ENCODE measurements at regions of chr4 and their contacts with region 1.

Region 1: GRCh38 chr4:7904952-7905915 is 34.4 kb downstream of the AFAP1 start:
- DNase-seq: no peak
- H3K4me3 ChIP-seq: no peak overlapping the region
- H3K27ac ChIP-seq: peak overlapping the region; percentile 75
- H3K4me1 ChIP-seq: peaks cover 94% of the 10 kb centered on the region
- H3K27me3 ChIP-seq: no peaks in the 10 kb centered on the region
- CTCF ChIP-seq: no peak
- POLR2A ChIP-seq: no peak

Region 2: DNA sequence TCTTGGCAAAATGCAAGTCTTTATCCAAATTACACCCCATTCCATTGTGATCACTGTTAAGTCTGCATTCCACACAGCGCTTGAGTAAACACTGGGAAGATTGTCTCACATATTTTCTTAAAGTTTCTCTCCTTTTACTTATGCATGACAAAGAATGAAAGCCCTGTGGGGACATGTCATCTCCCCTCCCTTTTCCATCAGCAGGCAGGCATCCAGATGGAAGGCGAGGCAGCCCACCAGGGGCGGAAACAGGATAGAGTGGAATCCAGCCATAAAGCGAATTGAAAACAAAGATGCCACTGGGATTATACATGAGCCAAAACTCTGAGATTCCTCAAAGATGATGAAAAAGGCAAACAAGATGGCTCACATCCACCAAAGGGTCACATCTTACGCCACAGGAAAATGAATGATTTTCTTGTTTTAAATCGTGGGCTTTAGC is 43.8 kb before region 1 on chr4:
- CTCF ChIA-PET with region 1: no interaction called
- POLR2A ChIA-PET with region 1: no interaction called
- dilution Hi-C with region 1: no loop called
- intact Hi-C with region 1: loop called (anchors 2 kb)
- DNase-seq: peak; percentile 90
- H3K4me3 ChIP-seq: peak overlapping the region in 1 of 3 experiments; percentile 42
- H3K27ac ChIP-seq: peak overlapping the region; percentile 99
- H3K4me1 ChIP-seq: peaks cover 55% of the 10 kb centered on the region
- H3K27me3 ChIP-seq: no peaks in the 10 kb centered on the region
- CTCF ChIP-seq: no peak
- POLR2A ChIP-seq: no peak

Region 3: DNA sequence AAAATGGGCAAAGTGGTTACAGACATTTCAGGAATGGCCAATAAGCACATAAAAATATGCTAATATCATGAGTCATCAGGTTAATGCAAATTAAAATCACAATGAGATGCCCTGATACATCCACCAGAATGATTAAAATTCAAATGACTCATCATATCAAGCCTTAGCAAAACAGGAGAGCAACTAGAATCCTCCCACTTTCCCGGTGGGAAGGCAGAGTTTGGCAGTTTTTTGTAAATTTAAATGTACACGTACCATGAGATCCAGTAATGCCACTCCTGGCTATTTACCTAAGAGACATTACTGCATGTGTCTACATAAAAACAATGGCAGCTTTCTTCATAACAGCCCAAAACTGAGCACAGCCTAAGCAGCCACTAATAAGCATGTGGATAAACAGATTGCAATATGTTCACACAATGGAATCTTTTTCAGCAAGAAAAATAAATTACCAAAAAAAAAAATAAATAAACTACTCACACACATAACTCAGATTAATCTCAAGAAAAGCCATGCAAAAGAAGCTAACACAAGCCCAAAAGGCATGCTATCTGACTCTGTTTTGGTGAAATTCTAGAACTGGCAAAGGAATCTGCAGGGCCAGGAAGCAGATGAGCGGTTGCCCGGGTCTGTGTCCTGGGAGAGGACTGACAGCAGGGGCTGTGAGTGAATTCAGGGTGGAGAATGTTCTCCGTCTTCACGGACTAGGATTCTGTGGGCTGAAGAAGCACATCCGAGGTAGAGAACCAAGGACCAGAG is 14.4 kb before region 1 on chr4:
- CTCF ChIA-PET with region 1: interaction called, 4 read pairs
- POLR2A ChIA-PET with region 1: no interaction called
- dilution Hi-C with region 1: no loop called
- intact Hi-C with region 1: loop called (anchors 1 kb)
- DNase-seq: peak; percentile 88
- H3K4me3 ChIP-seq: no peak overlapping the region
- H3K27ac ChIP-seq: peak overlapping the region; percentile 57
- H3K4me1 ChIP-seq: peaks cover 44% of the 10 kb centered on the region
- H3K27me3 ChIP-seq: no peaks in the 10 kb centered on the region
- CTCF ChIP-seq: no peak
- POLR2A ChIP-seq: no peak

Region 4: DNA sequence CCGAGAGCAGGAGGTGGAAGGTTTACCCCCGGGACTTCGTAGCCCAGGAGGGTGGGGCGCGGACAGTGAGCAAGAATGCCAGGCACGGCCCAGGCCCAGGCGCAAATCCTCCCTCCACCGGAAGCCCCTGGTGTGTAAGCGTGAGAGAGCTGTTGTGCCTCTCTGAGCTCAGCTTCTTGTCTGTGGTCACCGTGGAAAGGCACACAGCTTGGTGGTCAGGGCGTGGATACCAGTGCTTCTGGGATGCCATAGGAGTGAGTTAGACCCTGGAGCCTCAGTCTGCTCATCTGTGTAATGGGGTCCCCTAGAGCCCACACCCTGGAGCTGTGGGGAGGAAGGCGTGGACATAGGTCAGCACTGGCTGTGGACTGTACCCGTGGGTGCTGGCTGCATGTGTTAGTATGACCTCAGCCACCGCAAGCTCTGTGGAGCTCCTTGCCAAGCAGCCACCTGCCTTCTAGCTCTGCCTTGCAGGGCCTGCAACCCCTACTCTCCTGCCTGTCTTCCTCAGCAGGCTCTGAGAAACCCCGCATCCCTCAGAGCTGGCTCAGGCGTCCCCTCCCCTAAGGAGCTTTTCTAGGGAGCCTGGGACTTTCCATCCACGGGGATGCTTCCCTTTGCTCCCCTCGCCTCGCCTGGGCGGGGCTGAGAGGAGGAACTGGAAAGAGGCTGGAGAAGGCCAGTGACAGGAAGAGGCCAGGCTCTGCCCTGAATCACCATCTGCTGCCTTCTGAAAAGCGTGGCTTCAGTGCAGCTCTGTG is 62.4 kb after region 1 on chr4:
- CTCF ChIA-PET with region 1: interaction called, 3 read pairs
- POLR2A ChIA-PET with region 1: no interaction called
- dilution Hi-C with region 1: no loop called
- intact Hi-C with region 1: loop called (anchors 2 kb)
- DNase-seq: peak; percentile 74
- H3K4me3 ChIP-seq: no peak overlapping the region
- H3K27ac ChIP-seq: peak overlapping the region; percentile 89
- H3K4me1 ChIP-seq: peaks cover 48% of the 10 kb centered on the region
- H3K27me3 ChIP-seq: no peaks in the 10 kb centered on the region
- CTCF ChIP-seq: no peak
- POLR2A ChIP-seq: no peak

Region 5: DNA sequence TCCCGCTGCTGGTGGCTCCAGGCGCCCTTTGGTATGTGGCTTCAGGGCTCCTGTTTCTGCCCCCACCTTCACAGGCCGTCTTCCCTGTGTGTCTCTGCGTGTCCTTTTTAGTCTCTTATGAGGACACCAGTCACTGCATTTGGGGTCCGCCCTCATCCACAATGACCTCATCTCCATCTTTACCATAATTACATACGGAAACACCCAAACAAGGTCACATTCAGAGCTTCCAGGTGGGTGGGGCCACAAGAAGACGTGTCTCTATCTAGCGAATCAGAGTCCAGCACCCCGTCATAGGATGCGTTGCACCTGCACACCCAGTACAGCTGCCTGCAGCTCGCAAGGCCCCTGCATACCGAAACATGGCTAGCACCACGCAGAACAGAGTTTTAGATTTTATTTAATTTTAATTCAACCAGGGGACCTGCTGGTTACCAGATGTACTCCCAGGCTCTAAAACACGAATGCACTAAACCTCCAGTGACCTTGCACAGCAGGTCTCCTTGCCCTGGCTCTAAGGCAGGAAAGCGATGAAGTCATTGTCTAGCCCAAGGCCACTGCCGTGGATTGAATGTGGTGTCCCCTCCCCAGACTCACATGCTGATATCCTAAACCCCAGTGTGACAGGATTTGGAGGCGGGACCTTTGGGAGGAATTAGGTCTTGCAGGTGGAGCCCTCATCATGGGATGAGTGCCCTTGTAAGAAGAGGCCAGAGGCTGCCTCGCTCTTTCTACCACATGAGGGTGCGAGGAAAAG is 223.0 kb after region 1 on chr4:
- CTCF ChIA-PET with region 1: no interaction called
- POLR2A ChIA-PET with region 1: no interaction called
- dilution Hi-C with region 1: no loop called
- intact Hi-C with region 1: no loop called
- DNase-seq: no peak
- H3K4me3 ChIP-seq: no peak overlapping the region
- H3K27ac ChIP-seq: no peak overlapping the region
- H3K4me1 ChIP-seq: no peaks in the 10 kb centered on the region
- H3K27me3 ChIP-seq: no peaks in the 10 kb centered on the region
- CTCF ChIP-seq: no peak
- POLR2A ChIP-seq: no peak

Measured in endothelial cell of umbilical vein (primary cell).